ENCODE measurements at regions of chr11 and their contacts with region 1.

Region 1: GRCh38 chr11:59053387-59053786 is 32.7 kb upstream of the GLYATL1B start:
- DNase-seq: no peak
- ATAC-seq: peak; percentile 84
- H3K4me3 ChIP-seq: no peak overlapping the region
- H3K27ac ChIP-seq: no peak overlapping the region
- H3K4me1 ChIP-seq: peaks cover 4% of the 10 kb centered on the region; the same call in 1 of the 2 replicates
- H3K27me3 ChIP-seq: no peaks in the 10 kb centered on the region
- CTCF ChIP-seq: peak; percentile 47 to 75 (median 63)
- EP300 ChIP-seq: no peak
- POLR2A ChIP-seq: no peak
- RAD21 ChIP-seq: peak; percentile 44; the same call in 1 of the 2 replicates

Region 2: DNA sequence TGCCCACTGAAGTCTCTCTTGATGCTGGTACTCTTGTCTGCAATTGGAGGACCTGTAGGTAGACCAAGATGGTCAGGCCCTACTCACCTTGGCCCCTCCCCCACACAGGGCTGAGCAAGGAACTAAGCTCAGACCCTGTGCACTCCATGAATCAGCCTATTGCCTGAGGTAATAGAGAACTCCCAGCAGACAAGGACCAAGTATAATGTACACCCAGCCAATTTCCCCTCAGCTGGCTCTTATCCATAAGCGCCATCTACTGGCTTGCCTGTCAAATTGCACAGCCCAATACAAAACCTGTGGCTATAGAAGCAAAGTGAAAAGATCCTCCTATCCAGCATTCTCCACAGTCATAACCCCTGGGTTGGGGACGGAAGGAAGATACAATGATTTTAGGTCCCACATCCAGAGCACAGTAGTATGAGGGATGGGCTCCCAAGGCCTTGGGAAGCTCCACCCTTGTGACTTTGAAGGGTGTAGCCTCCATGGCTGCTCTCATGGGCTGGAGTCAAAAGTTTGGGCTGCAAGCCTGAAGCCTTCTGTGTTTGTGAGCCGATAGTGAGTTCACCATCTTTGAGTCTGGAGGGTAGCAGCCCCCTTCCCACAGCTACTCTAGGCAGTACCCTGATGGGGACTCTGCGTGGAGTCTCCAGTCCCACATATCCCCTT is 264.9 kb before region 1 on chr11:
- CTCF ChIA-PET with region 1: no interaction called
- POLR2A ChIA-PET with region 1: no interaction called
- RAD21 ChIA-PET with region 1: no interaction called
- SMC1A ChIA-PET with region 1: no interaction called
- in situ Hi-C with region 1: no loop called
- intact Hi-C with region 1: loop called (anchors 1 kb)
- DNase-seq: peak; percentile 7
- ATAC-seq: peak; percentile 98
- H3K4me3 ChIP-seq: no peak overlapping the region
- H3K27ac ChIP-seq: no peak overlapping the region
- H3K4me1 ChIP-seq: no peaks in the 10 kb centered on the region
- H3K27me3 ChIP-seq: no peaks in the 10 kb centered on the region; a peak in 1 of 4 replicates
- CTCF ChIP-seq: peak; percentile 88 to 94 (median 88); a peak in 5 of 6 replicates
- EP300 ChIP-seq: no peak
- POLR2A ChIP-seq: no peak
- RAD21 ChIP-seq: peak; percentile 94

Region 3: DNA sequence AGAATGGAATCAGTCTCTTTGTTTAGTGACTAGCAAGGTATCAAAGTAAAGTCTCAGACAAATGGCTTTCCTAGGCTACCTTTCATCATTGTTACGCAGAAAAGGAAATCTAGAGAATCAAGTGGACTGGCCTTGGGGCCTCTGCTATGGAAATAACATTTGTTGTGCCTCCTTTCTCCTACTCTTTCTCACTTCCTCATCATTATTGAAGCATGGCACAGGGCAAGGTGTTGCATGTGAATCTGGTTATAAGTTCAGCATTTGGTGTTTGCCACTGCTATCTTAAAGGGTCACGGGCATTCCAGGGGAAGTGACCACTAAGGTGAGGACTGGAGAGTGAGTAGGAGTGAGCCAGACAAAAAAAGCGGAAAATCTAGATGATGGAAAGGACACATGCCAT is 59.2 kb before region 1 on chr11:
- CTCF ChIA-PET with region 1: interaction called, 12 read pairs
- POLR2A ChIA-PET with region 1: no interaction called
- RAD21 ChIA-PET with region 1: no interaction called
- SMC1A ChIA-PET with region 1: interaction called, 3 read pairs
- in situ Hi-C with region 1: no loop called
- intact Hi-C with region 1: no loop called
- DNase-seq: no peak
- ATAC-seq: peak; percentile 38
- H3K4me3 ChIP-seq: no peak overlapping the region
- H3K27ac ChIP-seq: no peak overlapping the region
- H3K4me1 ChIP-seq: no peaks in the 10 kb centered on the region
- H3K27me3 ChIP-seq: no peaks in the 10 kb centered on the region
- CTCF ChIP-seq: no peak
- EP300 ChIP-seq: no peak
- POLR2A ChIP-seq: no peak
- RAD21 ChIP-seq: no peak

Region 4: DNA sequence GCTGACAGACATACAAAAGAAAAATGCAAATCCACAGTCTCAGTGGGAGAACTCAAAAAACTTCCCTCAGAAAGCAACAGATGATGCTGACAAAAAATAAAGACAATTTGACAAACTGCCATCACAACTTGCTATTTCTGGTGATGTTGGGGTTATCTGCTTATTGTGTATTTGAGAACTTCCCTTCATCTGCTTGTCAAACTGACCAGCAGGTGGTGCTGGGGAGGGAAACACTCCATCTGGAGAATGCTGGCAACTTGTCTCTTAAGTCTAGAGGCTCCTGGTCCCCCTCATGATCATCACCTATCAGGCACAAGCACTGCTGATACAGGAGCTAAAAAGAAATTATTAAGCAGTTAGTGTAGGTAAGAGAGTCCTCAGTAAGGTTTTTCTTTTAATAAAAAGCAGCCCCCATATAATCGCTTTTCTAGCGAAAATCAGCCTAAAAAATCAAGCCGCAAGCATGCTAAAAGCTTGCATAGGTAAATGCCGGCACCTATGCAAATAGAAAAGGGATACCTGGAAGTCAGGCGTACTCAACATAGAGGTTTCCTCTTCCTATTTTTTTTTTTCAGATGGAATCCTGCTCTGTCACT is 43.8 kb after region 1 on chr11:
- CTCF ChIA-PET with region 1: interaction called, 22 read pairs
- POLR2A ChIA-PET with region 1: no interaction called
- RAD21 ChIA-PET with region 1: interaction called, 6 read pairs
- SMC1A ChIA-PET with region 1: interaction called, 5 read pairs
- in situ Hi-C with region 1: no loop called
- intact Hi-C with region 1: loop called (anchors 2 kb)
- DNase-seq: no peak
- ATAC-seq: peak; percentile 70
- H3K4me3 ChIP-seq: 0 out of 2 replicates have a peak overlapping the region, but pooled peaks have one; percentile 3
- H3K27ac ChIP-seq: peak overlapping the region; percentile 53
- H3K4me1 ChIP-seq: peaks cover 22% of the 10 kb centered on the region
- H3K27me3 ChIP-seq: no peaks in the 10 kb centered on the region
- CTCF ChIP-seq: peak; percentile 51 to 67 (median 63)
- EP300 ChIP-seq: no peak
- POLR2A ChIP-seq: no peak
- RAD21 ChIP-seq: peak; percentile 50

Region 5: DNA sequence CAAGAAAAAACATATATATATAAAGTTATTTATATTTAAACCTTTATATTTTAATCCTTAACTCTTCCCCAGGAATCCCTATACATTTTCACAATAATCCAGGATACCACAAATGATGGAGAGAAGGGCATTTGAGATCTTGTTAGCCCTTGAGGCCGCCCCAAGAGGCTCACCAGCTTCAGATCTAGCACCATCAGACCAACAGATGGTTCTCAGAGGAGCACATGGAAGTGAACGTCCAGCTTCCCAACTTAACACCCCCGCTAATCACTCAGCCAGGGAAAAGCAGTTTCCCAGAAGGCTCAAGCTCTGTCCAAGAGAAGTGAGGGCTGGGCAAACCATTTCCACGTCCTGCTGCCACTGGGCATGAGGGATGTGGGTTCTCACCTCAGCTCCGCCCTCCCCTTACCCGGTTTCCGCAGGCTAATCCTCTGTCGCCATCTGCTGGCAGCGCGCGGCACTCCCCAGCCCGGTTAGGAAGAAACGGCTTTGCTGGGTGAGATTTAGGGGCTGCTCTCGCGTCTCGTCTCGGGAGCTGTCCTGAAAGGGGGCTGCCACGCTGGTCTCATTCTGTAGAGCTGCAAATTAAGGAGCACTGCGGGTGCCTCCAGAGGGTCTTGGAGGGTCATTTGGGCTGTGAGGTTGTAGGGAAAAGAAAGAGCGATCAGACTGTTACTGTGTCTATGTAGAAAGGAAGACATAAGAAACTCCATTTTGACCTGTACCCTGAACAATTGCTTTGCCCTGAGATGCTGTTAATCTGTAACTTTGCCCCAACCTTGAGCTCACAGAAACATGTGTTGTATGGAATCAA is 82.5 kb after region 1 on chr11:
- CTCF ChIA-PET with region 1: interaction called, 33 read pairs
- POLR2A ChIA-PET with region 1: no interaction called
- RAD21 ChIA-PET with region 1: interaction called, 16 read pairs
- SMC1A ChIA-PET with region 1: interaction called, 14 read pairs
- in situ Hi-C with region 1: loop called (anchors 5 kb)
- intact Hi-C with region 1: loop called (anchors 1 kb)
- DNase-seq: peak; percentile 40
- ATAC-seq: peak; percentile 100
- H3K4me3 ChIP-seq: no peak overlapping the region
- H3K27ac ChIP-seq: no peak overlapping the region
- H3K4me1 ChIP-seq: no peaks in the 10 kb centered on the region
- H3K27me3 ChIP-seq: no peaks in the 10 kb centered on the region
- CTCF ChIP-seq: peak; percentile 99 to 100 (median 100); a peak in 5 of 6 replicates
- EP300 ChIP-seq: no peak
- POLR2A ChIP-seq: no peak
- RAD21 ChIP-seq: peak; percentile 99

Measured in GM12878 (cell line).